ENCODE measurements at regions of chr17 and their contacts with region 1.

Region 1: DNA sequence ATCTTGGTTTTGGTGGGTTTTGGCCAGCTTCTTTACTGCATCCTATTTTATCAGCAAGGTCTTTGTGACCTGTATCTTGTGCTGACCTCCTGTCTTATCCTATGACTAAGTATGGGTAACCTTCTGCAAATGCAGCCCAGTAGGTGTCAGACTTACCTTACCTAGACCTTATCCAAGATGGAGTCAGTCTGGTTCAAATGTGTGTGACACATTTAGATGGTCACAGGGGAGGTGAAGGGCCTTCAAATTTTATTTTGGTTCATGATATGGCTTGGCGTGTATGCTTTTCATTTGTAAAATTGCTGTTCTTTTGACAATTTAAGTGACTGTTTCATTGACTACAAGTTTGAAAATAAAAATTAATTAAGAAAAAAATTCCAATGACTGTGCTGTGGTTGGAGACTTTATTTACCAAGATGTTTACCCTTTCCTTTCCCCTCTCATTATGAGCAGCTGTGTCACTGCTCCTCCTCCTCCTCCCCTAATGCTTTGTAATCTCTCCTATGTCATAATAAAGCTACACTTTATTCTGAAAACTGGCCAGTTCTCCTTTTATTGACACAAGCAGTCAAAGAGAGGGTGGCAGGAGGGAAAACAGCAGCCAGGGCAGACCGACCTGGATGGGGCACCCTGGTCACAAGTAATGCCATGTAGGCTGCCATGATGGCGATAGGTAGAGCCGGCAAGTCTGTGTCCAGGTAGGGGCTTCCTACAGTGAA is 49.4 kb downstream of the TNFRSF13B start:
- DNase-seq: peak in 1 of 2 donors; percentile 43
- ATAC-seq: peak in 1 of 3 donors; percentile 39
- H3K4me3 ChIP-seq: no peak overlapping the region
- H3K4me3 Mint-ChIP-seq: no peak overlapping the region
- H3K27ac ChIP-seq: no peak overlapping the region
- H3K27ac Mint-ChIP-seq: no peak overlapping the region
- H3K4me1 ChIP-seq: no peaks in the 10 kb centered on the region
- H3K4me1 Mint-ChIP-seq: no peaks in the 10 kb centered on the region
- H3K27me3 ChIP-seq: no peaks in the 10 kb centered on the region
- H3K27me3 Mint-ChIP-seq: no peaks in the 10 kb centered on the region
- CTCF ChIP-seq: no peak

Region 2: DNA sequence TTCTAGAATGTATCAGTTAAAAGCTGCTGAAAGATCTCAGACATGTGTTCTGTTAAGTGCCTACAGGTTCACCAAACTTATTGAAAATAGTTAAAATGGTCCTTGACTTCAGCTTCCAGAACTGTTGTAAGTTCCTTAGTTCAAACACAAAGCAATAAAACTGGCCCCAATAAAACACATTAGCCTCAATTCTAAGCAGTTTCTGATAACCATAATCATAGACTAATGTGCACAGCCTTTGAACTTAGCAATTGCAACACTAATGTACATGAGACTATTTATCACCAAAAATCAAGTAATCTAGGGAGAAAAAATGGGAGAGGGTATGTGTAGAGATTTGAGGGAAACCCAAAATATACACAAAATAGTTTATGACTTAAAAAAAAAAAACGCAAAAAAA is 690.2 kb before region 1 on chr17:
- intact Hi-C with region 1: no loop called
- DNase-seq: no peak
- ATAC-seq: no peak
- H3K4me3 ChIP-seq: no peak overlapping the region
- H3K4me3 Mint-ChIP-seq: no peak overlapping the region
- H3K27ac ChIP-seq: no peak overlapping the region
- H3K27ac Mint-ChIP-seq: no peak overlapping the region
- H3K4me1 ChIP-seq: no peaks in the 10 kb centered on the region
- H3K4me1 Mint-ChIP-seq: peaks cover 6% of the 10 kb centered on the region in 2 donors
- H3K27me3 ChIP-seq: no peaks in the 10 kb centered on the region
- H3K27me3 Mint-ChIP-seq: no peaks in the 10 kb centered on the region
- CTCF ChIP-seq: no peak

Region 3: GRCh38 chr17:16945663-16946218 is 23.2 kb after region 1 on chr17:
- intact Hi-C with region 1: no loop called
- DNase-seq: peak in 1 of 2 donors; percentile 5
- ATAC-seq: no peak
- H3K4me3 ChIP-seq: no peak overlapping the region
- H3K4me3 Mint-ChIP-seq: no peak overlapping the region
- H3K27ac ChIP-seq: no peak overlapping the region
- H3K27ac Mint-ChIP-seq: no peak overlapping the region
- H3K4me1 ChIP-seq: no peaks in the 10 kb centered on the region
- H3K4me1 Mint-ChIP-seq: no peaks in the 10 kb centered on the region
- H3K27me3 ChIP-seq: no peaks in the 10 kb centered on the region
- H3K27me3 Mint-ChIP-seq: peaks cover 5 to 13% of the 10 kb centered on the region in 2 donors
- CTCF ChIP-seq: no peak

Region 4: DNA sequence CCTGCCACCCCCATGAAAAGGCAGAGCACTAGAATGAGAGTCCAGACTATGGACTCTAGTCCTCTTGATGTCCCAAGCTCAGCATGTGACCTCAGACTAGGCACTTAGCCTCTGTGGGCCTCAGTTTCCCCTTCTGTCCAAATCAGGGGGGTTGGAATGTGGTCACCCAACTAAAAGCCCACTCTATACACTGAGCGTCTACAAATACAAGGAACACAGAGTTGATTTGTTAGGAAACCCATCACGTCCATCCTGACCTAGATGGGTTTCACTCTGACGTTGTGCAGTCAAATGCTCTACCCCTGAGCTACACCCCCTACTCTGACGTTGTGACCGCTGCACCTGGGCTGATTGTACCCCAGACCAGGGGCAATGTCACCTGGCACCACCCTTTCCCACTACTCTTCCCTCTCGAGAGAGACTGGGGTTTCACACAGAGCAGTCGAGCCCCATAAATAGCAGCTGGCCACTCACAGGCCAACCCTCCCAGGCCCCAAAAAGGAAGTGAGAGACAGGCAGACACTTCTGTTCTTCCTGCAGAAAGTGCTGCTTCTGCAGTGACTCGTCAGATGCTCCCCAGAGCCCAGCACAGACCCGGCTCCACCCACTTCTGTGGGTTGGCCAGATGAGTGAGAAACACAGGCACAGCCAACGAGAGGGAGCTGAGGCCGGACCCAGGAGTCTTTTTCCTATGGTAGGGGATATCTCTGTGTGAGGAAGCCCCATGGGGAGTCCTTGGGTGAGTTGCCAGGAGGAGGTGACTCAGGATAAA is 65.5 kb after region 1 on chr17:
- intact Hi-C with region 1: loop called (anchors 5 kb)
- DNase-seq: peak; percentile 57 to 70
- ATAC-seq: peak; percentile 86 to 90 (median 88)
- H3K4me3 ChIP-seq: no peak overlapping the region
- H3K4me3 Mint-ChIP-seq: peak overlapping the region; percentile 83
- H3K27ac ChIP-seq: peak overlapping the region; percentile 87
- H3K27ac Mint-ChIP-seq: peak overlapping the region; percentile 86 to 87
- H3K4me1 ChIP-seq: peaks cover 50% of the 10 kb centered on the region
- H3K4me1 Mint-ChIP-seq: peaks cover 20 to 49% of the 10 kb centered on the region in 2 donors
- H3K27me3 ChIP-seq: no peaks in the 10 kb centered on the region
- H3K27me3 Mint-ChIP-seq: no peaks in the 10 kb centered on the region
- CTCF ChIP-seq: no peak

Measured in natural killer cell (primary cell).